Adrenal gland (tissue), 19 donors: ENCODE measurements at regions of chr2 and their contacts with region 1.

Region 1: DNA sequence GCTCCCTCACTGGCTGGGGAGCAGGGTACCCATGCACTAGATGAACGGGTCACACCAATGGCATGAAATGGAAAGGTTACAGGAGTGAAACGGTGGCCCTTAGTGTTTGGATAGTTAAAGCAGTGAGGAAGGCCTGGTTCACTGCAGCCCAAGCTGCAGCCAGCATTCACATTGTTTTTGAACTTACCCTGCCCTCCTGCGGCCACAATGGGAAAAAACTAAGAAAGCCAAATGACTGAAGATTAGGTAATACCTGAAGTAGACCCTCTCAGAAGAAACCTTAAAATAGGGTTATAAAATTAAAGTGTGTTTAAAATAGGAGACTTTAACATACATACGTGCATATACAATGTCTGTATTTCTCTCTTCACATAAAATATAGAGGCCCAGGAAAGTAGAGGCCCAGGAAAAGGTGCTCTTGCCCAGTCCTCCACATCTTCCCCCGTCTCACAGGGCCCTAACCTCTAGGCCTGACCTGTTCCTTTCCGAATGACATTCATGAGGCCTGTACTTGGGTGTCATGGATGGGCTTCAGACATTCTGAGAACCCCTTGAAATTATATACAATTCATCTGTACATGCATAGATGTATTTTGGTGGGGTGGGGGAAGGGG is 33.3 kb downstream of the DOK1 start:
- DNase-seq: peak; percentile 62 to 87 (median 75)
- H3K4me3 ChIP-seq: no peak overlapping the region
- H3K27ac ChIP-seq: no peak overlapping the region
- H3K4me1 ChIP-seq: no peaks in the 10 kb centered on the region
- H3K27me3 ChIP-seq: no peaks in the 10 kb centered on the region
- CTCF ChIP-seq: peak; percentile 55 to 81 (median 74)
- POLR2A ChIP-seq: no peak

Region 2: GRCh38 chr2:74482801-74483674 is 104.7 kb before region 1 on chr2 and contains the starts of genes CCDC142 and TTC31:
- intact Hi-C with region 1: loop called (anchors 5 kb)
- DNase-seq: peak; percentile 95 to 99 (median 97)
- H3K4me3 ChIP-seq: peak within 1 kb of the TSS; percentile 72 to 99 (median 89)
- H3K27ac ChIP-seq: peak within 1 kb of the TSS; percentile 62 to 93 (median 83)
- H3K4me1 ChIP-seq: peaks cover 13 to 25% of the 10 kb centered on the region in 2 donors
- H3K27me3 ChIP-seq: no peaks in the 10 kb centered on the region
- CTCF ChIP-seq: peak; percentile 67 to 95 (median 88)
- POLR2A ChIP-seq: peak; percentile 29 to 45
- total RNA-seq, gene CCDC142: 7.4 to 46.0 (median 13.3) TPM
- total RNA-seq, gene TTC31: 12.6 to 38.6 (median 20.1) TPM